Endothelial cell of umbilical vein (primary cell): ENCODE measurements at regions of chr5 and their contacts with region 1.

Region 1: DNA sequence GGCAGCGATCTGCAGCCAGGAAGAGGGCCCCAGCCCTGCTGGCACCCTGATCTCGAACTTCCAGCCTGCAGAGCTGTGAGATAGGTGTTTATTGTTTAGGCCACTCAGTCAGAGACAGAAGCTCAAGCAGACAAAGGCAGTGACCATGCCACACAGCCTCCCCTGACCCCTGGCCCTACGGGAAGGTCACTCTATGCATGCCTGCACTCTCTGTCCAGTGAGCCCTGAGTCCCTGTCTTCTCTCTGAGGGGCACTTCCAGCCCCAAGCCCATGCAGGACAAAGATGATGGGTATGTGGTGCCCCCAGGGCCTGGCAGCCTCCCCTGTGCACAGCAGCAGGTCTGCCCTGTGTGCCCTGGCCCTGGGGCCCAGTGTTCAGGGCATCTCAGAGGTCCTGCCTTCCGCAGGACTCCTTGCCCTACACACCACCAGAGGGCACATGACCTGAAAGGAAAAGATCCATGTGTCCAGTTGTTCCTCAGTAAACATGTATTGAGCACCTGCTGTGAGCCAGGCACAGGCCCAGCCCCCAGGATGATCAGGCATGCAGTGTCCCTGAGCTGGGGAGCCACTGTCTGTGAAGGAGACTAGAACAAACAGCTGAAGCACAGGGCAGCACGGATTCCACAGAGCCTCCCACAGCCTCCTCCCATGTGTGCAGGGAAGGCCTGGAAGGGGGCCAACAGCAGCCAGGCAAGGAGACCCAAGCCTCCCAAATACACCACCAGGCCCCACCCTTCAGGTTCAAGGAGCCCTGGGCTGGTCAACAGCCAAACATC is 109.3 kb downstream of the ATPSCKMT start:
- DNase-seq: no peak
- H3K4me3 ChIP-seq: no peak overlapping the region
- H3K27ac ChIP-seq: no peak overlapping the region
- H3K4me1 ChIP-seq: no peaks in the 10 kb centered on the region
- H3K27me3 ChIP-seq: no peaks in the 10 kb centered on the region
- CTCF ChIP-seq: no peak
- POLR2A ChIP-seq: no peak

Region 2: GRCh38 chr5:10233505-10233904 is 93.1 kb after region 1 on chr5:
- CTCF ChIA-PET with region 1: no interaction called
- POLR2A ChIA-PET with region 1: no interaction called
- dilution Hi-C with region 1: no loop called
- intact Hi-C with region 1: loop called (anchors 1 kb)
- DNase-seq: peak; percentile 31
- H3K4me3 ChIP-seq: no peak overlapping the region
- H3K27ac ChIP-seq: no peak overlapping the region
- H3K4me1 ChIP-seq: no peaks in the 10 kb centered on the region
- H3K27me3 ChIP-seq: no peaks in the 10 kb centered on the region
- CTCF ChIP-seq: peak; percentile 19 to 24
- POLR2A ChIP-seq: no peak